Activated CD4-positive, alpha-beta memory T cell treated with anti-CD3 and anti-CD28 coated beads for 36 hours (primary cell): ENCODE measurements at regions of chr6 and their contacts with region 1.

Region 1: GRCh38 chr6:70686548-70687133 is 19.0 kb downstream of the SMAP1 start:
- DNase-seq: no peak
- H3K4me3 Mint-ChIP-seq: no peak overlapping the region
- H3K27ac Mint-ChIP-seq: no peak overlapping the region
- H3K4me1 Mint-ChIP-seq: peaks cover 44% of the 10 kb centered on the region
- H3K27me3 Mint-ChIP-seq: no peaks in the 10 kb centered on the region

Region 2: DNA sequence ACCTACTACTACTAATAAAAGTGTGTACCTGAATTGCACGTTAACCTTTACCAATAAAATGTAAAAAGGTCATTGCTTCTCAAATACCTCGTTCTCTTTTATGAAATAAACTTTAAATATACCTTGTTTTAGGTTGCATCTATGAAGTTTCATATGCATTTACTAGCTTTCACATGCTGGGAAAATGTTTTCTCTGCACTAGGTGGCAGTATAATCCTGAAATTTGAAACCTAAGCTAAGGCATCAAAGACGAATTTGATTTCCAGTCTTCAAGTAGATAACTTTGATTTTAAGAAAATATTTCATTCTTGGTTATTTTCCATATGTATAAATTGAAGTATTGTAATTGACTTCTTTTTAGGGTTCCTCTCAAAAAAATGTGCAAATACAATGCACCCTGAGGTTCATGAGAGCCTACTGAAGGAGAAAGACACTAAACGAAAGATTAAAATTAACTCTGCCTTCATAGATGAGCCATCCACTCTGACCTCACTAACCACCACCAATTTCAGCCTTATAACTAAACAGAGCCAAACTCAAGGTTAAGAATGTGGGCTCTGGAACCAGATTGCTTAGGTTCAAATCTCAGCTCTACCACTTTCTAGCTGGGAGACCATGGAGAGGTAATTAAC is 376.5 kb before region 1 on chr6:
- CTCF ChIA-PET with region 1: interaction called, 18 read pairs
- POLR2A ChIA-PET with region 1: no interaction called
- intact Hi-C with region 1: loop called (anchors 1 kb)
- DNase-seq: no peak
- H3K4me3 Mint-ChIP-seq: no peak overlapping the region
- H3K27ac Mint-ChIP-seq: no peak overlapping the region
- H3K4me1 Mint-ChIP-seq: peaks cover 2% of the 10 kb centered on the region
- H3K27me3 Mint-ChIP-seq: peaks cover 15% of the 10 kb centered on the region

Region 3: DNA sequence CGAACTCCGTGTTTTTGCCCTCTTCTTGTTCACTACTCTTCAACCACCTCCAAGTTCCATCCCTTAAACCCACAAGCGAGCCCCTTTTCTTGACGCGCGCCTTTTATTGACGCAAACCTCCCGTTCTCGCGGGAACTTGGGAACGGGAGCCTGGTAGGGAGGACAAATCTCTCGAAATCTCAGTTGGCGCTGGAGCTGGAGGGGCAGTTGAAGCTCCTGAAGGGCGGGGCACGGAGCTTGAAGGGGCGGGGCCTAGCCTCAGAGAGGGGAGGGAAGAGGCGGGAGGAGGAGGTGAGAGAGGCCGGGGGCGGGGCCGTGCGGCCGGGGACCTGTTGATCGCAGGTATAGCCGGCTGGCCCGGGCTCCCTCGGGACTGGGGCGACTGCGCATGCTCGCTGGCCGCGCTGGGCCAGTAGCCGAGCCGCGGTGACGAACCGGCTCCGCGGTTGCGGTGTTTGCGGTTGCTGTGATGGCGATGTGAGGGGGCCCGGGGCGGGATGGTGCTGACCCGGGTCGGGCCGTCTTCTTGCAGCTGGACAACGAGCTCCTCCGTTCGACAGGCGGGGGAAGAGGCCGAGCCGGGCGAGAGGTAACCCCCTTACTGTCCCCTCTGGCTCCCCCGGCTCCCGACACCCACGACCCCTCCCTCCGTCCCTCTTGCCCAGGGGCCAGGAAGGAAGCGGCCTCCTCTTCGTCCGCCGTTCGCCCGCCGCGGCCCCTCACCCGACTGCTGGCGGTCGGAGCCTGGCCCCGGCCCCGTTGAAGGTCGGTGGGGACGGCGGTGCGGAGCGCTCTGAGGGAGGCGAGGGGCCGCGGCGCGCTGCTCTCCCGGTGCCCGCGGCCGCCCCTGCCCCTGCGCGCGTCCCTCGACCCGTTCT is 273.3 kb before region 1 on chr6 and contains the start of gene FAM135A:
- CTCF ChIA-PET with region 1: interaction called, 3 read pairs
- POLR2A ChIA-PET with region 1: no interaction called
- intact Hi-C with region 1: loop called (anchors 2 kb)
- DNase-seq: peak; percentile 98
- H3K4me3 Mint-ChIP-seq: peak within 1 kb of the TSS; percentile 88
- H3K27ac Mint-ChIP-seq: peak within 1 kb of the TSS; percentile 75
- H3K4me1 Mint-ChIP-seq: peaks cover 17% of the 10 kb centered on the region
- H3K27me3 Mint-ChIP-seq: no peaks in the 10 kb centered on the region
- total RNA-seq, gene FAM135A: 9.0 to 9.2 TPM

Region 4: GRCh38 chr6:70547313-70547712 is 139.3 kb before region 1 on chr6:
- CTCF ChIA-PET with region 1: interaction called, 31 read pairs
- POLR2A ChIA-PET with region 1: no interaction called
- intact Hi-C with region 1: loop called (anchors 1 kb)
- DNase-seq: no peak
- H3K4me3 Mint-ChIP-seq: no peak overlapping the region
- H3K27ac Mint-ChIP-seq: no peak overlapping the region
- H3K4me1 Mint-ChIP-seq: no peaks in the 10 kb centered on the region
- H3K27me3 Mint-ChIP-seq: no peaks in the 10 kb centered on the region

Region 5: GRCh38 chr6:70667711-70668498 is 18.7 kb before region 1 on chr6 and contains the start of gene SMAP1:
- CTCF ChIA-PET with region 1: interaction called, 19 read pairs
- POLR2A ChIA-PET with region 1: no interaction called
- intact Hi-C with region 1: loop called (anchors 1 kb)
- DNase-seq: peak; percentile 96
- H3K4me3 Mint-ChIP-seq: peak within 1 kb of the TSS; percentile 90
- H3K27ac Mint-ChIP-seq: peak within 1 kb of the TSS; percentile 88
- H3K4me1 Mint-ChIP-seq: peaks cover 54% of the 10 kb centered on the region
- H3K27me3 Mint-ChIP-seq: no peaks in the 10 kb centered on the region
- total RNA-seq, gene SMAP1: 23.6 to 24.2 TPM

Region 6: DNA sequence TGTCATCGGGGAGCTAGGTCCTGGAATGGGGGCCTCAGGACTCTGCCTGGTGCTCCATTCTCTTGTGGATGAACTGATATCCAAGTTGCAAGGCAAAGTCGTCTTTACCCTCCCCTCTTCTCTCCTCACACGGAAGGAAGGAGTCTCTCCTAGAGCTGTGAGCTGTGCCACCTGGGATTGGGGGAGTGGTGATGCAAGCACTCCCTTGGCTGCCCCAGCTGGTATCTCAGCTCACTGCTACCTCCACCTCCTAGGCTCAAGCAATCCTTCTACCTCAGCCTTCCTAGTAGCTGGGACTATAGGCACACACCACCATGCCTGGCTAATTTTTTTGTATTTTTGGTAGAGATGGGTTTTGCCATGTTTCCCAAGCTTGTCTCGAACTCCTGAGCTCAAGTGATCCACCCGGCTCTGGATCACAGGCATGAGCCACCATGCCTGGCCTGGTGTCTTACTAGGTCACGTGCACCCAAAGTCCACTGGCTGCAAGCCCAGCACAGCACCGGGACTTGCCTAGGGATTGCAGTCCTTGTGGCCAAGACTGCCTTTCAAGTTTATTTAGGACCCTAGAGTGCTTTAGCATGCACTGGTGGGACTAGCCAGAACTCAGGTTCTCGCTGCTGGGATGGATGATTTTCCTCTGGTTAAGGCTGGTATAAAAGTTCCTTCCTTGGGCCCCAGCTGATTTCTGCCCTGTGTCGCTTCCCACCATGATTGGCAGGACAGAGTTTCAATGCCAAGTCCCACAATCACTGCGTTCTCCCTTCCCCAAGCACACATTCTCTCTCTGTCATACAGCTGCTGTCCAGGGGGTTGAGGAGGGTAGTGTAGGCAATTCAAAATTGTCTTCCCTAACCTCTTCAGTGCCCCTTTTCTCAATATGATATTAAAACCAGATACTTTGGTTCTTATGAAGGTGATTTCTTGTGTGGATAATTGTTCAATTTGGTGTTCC is 14.6 kb after region 1 on chr6:
- CTCF ChIA-PET with region 1: interaction called, 11 read pairs
- POLR2A ChIA-PET with region 1: no interaction called
- intact Hi-C with region 1: no loop called
- DNase-seq: no peak
- H3K4me3 Mint-ChIP-seq: no peak overlapping the region
- H3K27ac Mint-ChIP-seq: no peak overlapping the region
- H3K4me1 Mint-ChIP-seq: peaks cover 59% of the 10 kb centered on the region
- H3K27me3 Mint-ChIP-seq: no peaks in the 10 kb centered on the region

Region 7: DNA sequence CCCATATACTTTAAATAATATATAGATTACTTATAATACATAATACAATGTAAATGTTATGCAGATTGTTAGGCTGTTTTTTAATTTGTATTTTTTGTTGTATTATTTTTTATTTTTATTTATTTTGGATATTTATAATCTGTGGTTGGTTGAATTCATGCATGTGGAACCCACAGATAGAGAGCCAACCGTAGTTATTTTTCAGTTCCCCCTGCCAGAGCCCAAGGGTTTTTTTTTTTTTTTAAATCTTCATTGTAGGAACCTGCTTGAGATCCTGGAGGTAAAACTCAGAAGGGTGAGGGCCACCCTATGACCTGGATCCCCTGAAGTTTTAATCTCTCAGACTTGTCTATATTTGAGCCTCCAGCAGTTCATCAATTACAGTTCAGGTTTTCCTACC is 137.0 kb after region 1 on chr6:
- CTCF ChIA-PET with region 1: no interaction called
- POLR2A ChIA-PET with region 1: no interaction called
- intact Hi-C with region 1: no loop called
- DNase-seq: no peak
- H3K4me3 Mint-ChIP-seq: no peak overlapping the region
- H3K27ac Mint-ChIP-seq: no peak overlapping the region
- H3K4me1 Mint-ChIP-seq: peaks cover 4% of the 10 kb centered on the region
- H3K27me3 Mint-ChIP-seq: no peaks in the 10 kb centered on the region